HCT116 (cell line): ENCODE measurements at regions of chr20 and their contacts with region 1.

Region 1: DNA sequence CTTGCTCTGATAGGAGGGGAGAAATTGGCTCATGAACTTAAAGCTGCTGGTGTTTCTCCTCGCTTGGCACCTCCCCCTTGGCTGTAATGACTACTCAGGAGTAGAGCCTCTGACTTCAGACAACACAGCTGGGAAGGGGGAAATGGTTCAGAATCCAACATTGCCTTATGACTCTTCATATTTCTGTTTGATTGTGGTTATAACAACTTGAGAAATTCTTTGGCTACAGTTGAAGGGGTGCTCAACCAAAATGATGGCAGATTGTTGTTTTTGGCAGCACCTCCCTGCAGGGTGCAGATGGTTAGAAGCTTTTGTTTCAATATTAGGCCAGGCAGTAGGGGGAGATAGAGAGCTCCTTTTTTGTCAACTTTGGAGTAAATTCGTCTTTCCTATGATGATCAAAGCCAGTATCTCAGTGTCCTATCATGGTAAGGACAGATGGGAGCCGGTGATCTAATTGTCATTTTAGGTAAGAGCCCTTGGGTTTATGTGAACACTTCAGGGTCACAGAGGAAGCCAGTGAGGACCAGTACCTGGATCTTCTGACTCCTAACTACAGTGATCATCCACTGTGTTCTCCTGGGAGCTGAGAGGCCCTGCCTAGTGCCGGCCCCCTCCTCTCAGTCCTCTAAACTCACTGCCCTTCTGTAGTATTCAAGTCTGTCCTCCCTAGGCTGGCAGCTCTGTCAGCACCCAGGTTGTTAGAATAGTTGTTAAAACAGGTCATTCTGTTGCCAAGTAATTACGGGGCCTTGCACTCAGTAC is 39.9 kb downstream of the RPRD1B start:
- DNase-seq: peak; percentile 24
- ATAC-seq: peak; percentile 80
- H3K4me3 ChIP-seq: no peak overlapping the region
- H3K27ac ChIP-seq: no peak overlapping the region
- H3K4me1 ChIP-seq: no peaks in the 10 kb centered on the region
- H3K27me3 ChIP-seq: no peaks in the 10 kb centered on the region
- CTCF ChIP-seq: peak; percentile 57 to 78 (median 69); a peak in 5 of 6 replicates
- POLR2A ChIP-seq: no peak
- RAD21 ChIP-seq: peak; percentile 51; the same call in 1 of the 2 replicates

Region 2: GRCh38 chr20:38083338-38084048 is 10.0 kb after region 1 on chr20:
- CTCF ChIA-PET with region 1: interaction called, 13 read pairs
- POLR2A ChIA-PET with region 1: no interaction called
- RAD21 ChIA-PET with region 1: no interaction called
- intact Hi-C with region 1: no loop called
- DNase-seq: no peak
- ATAC-seq: no peak
- H3K4me3 ChIP-seq: no peak overlapping the region
- H3K27ac ChIP-seq: no peak overlapping the region
- H3K4me1 ChIP-seq: no peaks in the 10 kb centered on the region
- H3K27me3 ChIP-seq: no peaks in the 10 kb centered on the region
- CTCF ChIP-seq: no peak
- POLR2A ChIP-seq: no peak
- RAD21 ChIP-seq: no peak

Region 3: GRCh38 chr20:38165089-38165989 is 91.8 kb after region 1 on chr20 and contains the start of gene TGM2:
- CTCF ChIA-PET with region 1: interaction called, 4 read pairs
- POLR2A ChIA-PET with region 1: no interaction called
- RAD21 ChIA-PET with region 1: no interaction called
- intact Hi-C with region 1: loop called (anchors 1 kb)
- DNase-seq: no peak
- ATAC-seq: peak; percentile 96
- H3K4me3 ChIP-seq: peak within 1 kb of the TSS; percentile 41 to 58
- H3K27ac ChIP-seq: no peak within 1 kb of the TSS; the same call in 1 of the 2 replicates
- H3K4me1 ChIP-seq: peaks cover 14 to 33% of the 10 kb centered on the region in 2 experiments; a peak in 3 of 4 replicates
- H3K27me3 ChIP-seq: no peaks in the 10 kb centered on the region
- CTCF ChIP-seq: peak; percentile 78 to 91 (median 81)
- POLR2A ChIP-seq: no peak
- RAD21 ChIP-seq: peak; percentile 86
- total RNA-seq, gene TGM2: 6.1 TPM